Aorta (tissue), 5 donors: ENCODE measurements at regions of chr18 and their contacts with region 1.

Region 1: DNA sequence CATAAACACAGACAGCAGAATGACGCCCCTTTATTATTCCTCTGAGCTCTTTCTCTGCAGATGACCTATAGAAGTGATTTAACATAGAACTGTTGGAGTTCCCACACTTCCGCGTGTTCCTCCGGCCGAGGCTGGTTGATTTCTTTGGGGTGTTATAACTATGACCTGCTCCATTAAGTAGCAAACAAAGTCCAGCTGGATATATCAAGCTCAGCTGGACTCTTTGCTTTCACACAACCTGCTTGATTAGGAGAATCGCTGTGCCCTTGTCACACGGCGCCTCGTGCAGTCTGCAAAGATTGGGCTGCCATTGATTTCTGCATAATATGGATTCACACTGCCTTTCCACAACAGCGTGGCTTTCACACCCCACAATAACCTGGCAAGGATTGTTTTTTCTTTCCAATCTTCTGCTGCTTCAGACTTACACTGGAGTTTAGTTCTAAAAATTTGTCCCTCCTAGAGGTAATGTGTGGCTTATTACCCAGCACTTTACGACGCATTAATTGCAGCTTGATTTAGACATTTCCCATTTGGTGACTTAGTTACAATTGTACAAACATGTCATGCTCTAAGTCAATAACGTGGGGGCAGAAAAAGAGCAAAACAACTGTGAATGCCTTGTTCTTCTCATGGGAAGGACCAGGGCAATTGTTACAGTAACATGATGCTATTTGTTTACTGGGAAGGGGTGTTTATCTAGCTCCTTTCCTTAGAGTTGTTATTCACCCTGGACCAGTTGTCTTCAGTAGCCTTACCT is 485.7 kb downstream of the TXNL1 start:
- DNase-seq: no peak
- ATAC-seq: no peak
- H3K4me3 ChIP-seq: no peak overlapping the region
- H3K27ac ChIP-seq: no peak overlapping the region
- H3K4me1 ChIP-seq: no peaks in the 10 kb centered on the region
- H3K27me3 ChIP-seq: no peaks in the 10 kb centered on the region

Region 2: GRCh38 chr18:56235481-56236013 is 82.8 kb after region 1 on chr18:
- intact Hi-C with region 1: loop called in 1 of 2 experiments (anchors 10 kb)
- DNase-seq: no peak
- ATAC-seq: no peak
- H3K4me3 ChIP-seq: no peak overlapping the region
- H3K27ac ChIP-seq: no peak overlapping the region
- H3K4me1 ChIP-seq: no peaks in the 10 kb centered on the region
- H3K27me3 ChIP-seq: no peaks in the 10 kb centered on the region